Activated CD4-positive, alpha-beta T cell treated with anti-CD3 and anti-CD28 coated beads, Interleukin-2, amount 10 ng/mL, durations not matched to agents 24 days and 14 days (primary cell): ENCODE measurements at regions of chr11 and their contacts with region 1.

Region 1: DNA sequence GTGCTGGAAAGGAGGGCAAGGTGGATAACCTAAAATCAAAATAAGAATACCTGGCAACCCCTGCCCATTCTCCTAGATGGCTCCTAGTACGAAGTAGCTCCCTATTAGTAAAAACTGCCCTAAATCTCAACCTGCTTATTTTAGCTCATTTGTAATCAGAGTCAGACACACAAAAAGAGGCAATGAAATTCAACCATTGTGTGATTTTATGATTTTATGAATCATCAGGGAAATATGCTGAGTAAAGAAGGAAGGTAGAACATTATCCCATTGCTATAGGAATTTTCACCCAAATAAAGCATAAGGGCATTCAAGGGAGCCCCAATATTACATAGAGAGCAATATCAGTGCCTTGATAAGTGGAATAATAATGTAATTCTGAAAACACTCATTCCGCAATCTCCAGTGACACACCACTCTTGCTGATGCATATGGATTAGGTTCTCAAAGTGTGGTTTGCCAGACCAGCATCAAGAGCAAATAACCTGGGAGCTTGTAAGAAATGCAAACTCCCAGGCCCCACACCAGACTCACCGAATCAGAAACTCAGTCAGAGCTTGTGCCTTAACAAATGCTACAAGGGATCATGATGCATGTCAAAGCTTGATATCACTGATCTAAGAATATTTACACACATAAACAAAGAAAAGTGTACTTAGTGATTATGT is 789.6 kb downstream of the DLG2 start:
- DNase-seq: no peak
- H3K4me3 Mint-ChIP-seq: no peak overlapping the region
- H3K27ac Mint-ChIP-seq: no peak overlapping the region
- H3K4me1 Mint-ChIP-seq: no peaks in the 10 kb centered on the region
- H3K27me3 Mint-ChIP-seq: no peaks in the 10 kb centered on the region

Region 2: GRCh38 chr11:84452211-84452610 is 385.3 kb before region 1 on chr11:
- intact Hi-C with region 1: loop called (anchors 5 kb)
- DNase-seq: no peak
- H3K4me3 Mint-ChIP-seq: no peak overlapping the region
- H3K27ac Mint-ChIP-seq: no peak overlapping the region
- H3K4me1 Mint-ChIP-seq: no peaks in the 10 kb centered on the region
- H3K27me3 Mint-ChIP-seq: no peaks in the 10 kb centered on the region

Region 3: GRCh38 chr11:84763931-84764330 is 73.6 kb before region 1 on chr11:
- intact Hi-C with region 1: no loop called
- DNase-seq: no peak
- H3K4me3 Mint-ChIP-seq: no peak overlapping the region
- H3K27ac Mint-ChIP-seq: no peak overlapping the region
- H3K4me1 Mint-ChIP-seq: no peaks in the 10 kb centered on the region
- H3K27me3 Mint-ChIP-seq: no peaks in the 10 kb centered on the region

Region 4: DNA sequence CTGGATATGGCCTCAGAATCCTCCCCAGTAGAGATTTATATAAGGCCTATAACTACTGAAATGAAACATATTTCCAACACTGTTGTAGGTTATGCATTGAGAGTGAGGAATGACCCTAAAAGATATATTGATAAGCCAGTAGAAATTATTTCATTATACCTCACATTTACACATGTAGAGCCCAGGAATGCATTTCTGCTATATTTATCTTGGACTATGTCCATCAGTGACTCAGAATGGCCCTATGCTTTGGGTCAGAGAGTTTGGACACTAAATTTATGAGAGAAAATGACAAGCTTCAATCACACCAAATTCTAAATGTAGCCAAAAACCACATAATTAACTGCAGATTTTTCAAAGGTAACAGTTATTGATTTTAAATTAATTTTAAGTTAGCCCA is 27.7 kb after region 1 on chr11:
- intact Hi-C with region 1: no loop called
- DNase-seq: no peak
- H3K4me3 Mint-ChIP-seq: no peak overlapping the region
- H3K27ac Mint-ChIP-seq: no peak overlapping the region
- H3K4me1 Mint-ChIP-seq: no peaks in the 10 kb centered on the region
- H3K27me3 Mint-ChIP-seq: no peaks in the 10 kb centered on the region

Region 5: GRCh38 chr11:85257837-85258236 is 420.3 kb after region 1 on chr11:
- intact Hi-C with region 1: no loop called
- DNase-seq: no peak
- H3K4me3 Mint-ChIP-seq: no peak overlapping the region
- H3K27ac Mint-ChIP-seq: no peak overlapping the region
- H3K4me1 Mint-ChIP-seq: no peaks in the 10 kb centered on the region
- H3K27me3 Mint-ChIP-seq: no peaks in the 10 kb centered on the region